ENCODE measurements at regions of chr19 and their contacts with region 1.

Region 1: GRCh38 chr19:35612559-35613321 is at the start of gene HAUS5:
- DNase-seq: peak; percentile 99
- ATAC-seq: peak; percentile 86
- H3K4me3 Mint-ChIP-seq: peak within 1 kb of the TSS; percentile 87
- H3K27ac Mint-ChIP-seq: peak within 1 kb of the TSS; percentile 91
- H3K4me1 Mint-ChIP-seq: peaks cover 29% of the 10 kb centered on the region
- H3K27me3 Mint-ChIP-seq: no peaks in the 10 kb centered on the region
- total RNA-seq, gene HAUS5: 50.5 to 51.7 TPM

Region 2: DNA sequence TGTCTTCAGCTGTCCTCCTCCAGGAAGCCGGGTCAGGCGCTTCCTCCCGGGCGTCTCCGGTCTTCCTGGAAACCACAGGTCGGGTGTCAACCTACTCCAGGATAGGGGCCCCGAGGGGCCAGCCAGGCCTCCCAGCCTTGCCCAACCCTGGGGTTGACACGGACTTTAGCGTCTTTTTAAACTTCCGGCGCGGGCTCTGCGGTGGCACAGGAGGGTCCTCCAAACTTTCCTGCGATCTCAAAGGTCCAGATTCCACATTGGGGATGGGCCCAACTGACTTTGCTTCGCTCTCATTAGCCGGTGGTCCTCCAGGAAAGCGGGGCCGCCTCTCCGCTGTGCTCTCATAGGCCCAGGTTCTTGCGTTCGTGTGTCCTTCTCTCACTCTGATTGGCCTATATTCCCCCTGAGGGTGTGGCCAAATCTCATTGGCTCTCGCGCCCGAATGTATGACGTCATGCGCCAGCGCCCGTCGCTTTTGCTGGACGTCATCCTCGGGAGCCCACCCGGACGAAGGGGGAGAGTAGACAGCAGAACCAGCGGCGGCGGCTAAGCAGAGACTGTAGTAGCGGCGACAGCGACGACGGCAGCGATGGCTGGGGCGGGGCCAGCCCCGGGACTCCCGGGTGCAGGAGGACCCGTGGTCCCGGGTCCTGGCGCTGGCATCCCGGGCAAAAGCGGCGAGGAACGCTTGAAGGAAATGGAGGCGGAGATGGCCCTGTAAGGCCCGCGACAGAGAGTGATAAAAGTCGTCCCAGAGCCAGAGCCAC is 16.0 kb after region 1 on chr19 and contains the start of gene RBM42:
- POLR2A ChIA-PET with region 1: interaction called, 12 read pairs
- DNase-seq: peak; percentile 98
- ATAC-seq: peak; percentile 100
- H3K4me3 Mint-ChIP-seq: peak within 1 kb of the TSS; percentile 97
- H3K27ac Mint-ChIP-seq: peak within 1 kb of the TSS; percentile 99
- H3K4me1 Mint-ChIP-seq: peaks cover 14% of the 10 kb centered on the region
- H3K27me3 Mint-ChIP-seq: no peaks in the 10 kb centered on the region
- total RNA-seq, gene RBM42: 87.4 to 92.2 TPM

Region 3: DNA sequence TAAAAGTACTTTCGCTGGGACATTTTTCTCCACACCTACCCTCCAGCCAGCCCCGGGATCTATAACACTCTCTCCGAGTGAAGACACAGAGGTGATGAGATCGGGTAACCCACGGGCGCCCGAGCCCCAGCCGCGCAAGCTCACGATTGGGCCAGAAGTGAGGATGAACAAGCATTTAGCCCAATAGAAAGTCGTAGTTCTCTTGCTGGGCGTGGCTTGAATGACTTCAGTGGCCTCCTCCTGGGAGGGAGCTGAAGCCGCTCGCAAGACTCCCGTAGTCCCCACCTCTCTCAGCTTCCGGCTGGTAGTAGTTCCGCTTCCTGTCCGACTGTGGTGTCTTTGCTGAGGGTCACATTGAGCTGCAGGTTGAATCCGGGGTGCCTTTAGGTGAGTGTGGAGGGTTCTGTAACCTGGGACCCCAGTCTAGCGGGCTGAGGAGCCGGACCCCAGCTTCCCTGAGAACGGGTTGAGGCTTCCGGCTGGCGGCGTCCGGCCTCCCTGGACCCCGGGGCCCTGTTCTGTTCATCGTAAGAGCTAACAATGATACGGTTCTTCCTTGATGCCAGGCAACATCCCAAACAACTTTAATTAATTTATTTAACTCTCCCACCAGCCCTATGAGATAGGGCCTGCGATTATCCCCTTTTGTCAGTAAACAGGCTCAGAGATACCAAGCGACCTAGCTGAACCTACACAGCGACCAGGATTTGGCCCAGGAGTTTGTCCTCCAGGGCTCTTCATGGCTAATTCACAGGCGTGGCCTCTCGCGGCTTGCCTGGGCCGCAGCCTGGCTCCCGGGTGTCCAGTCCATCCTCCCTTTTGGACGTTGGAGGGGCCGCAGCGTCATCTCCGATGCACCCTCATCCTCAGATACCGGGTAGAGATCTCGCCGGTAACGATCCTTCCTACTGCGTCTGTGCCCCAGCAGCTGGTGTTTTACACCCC is 35.5 kb after region 1 on chr19 and contains the start of gene COX6B1:
- POLR2A ChIA-PET with region 1: interaction called, 21 read pairs
- DNase-seq: peak; percentile 82
- ATAC-seq: peak; percentile 70
- H3K4me3 Mint-ChIP-seq: peak within 1 kb of the TSS; percentile 92
- H3K27ac Mint-ChIP-seq: peak within 1 kb of the TSS; percentile 90
- H3K4me1 Mint-ChIP-seq: peaks cover 38% of the 10 kb centered on the region
- H3K27me3 Mint-ChIP-seq: no peaks in the 10 kb centered on the region
- total RNA-seq, gene COX6B1: 407 to 412 TPM

Measured in activated naive CD8-positive, alpha-beta T cell treated with anti-CD3 and anti-CD28 coated beads, Interleukin-2, amount 10 ng/mL, durations not matched to agents 7 days and 5 days (primary cell).